ENCODE measurements at regions of chr18 and their contacts with region 1.

Region 1: DNA sequence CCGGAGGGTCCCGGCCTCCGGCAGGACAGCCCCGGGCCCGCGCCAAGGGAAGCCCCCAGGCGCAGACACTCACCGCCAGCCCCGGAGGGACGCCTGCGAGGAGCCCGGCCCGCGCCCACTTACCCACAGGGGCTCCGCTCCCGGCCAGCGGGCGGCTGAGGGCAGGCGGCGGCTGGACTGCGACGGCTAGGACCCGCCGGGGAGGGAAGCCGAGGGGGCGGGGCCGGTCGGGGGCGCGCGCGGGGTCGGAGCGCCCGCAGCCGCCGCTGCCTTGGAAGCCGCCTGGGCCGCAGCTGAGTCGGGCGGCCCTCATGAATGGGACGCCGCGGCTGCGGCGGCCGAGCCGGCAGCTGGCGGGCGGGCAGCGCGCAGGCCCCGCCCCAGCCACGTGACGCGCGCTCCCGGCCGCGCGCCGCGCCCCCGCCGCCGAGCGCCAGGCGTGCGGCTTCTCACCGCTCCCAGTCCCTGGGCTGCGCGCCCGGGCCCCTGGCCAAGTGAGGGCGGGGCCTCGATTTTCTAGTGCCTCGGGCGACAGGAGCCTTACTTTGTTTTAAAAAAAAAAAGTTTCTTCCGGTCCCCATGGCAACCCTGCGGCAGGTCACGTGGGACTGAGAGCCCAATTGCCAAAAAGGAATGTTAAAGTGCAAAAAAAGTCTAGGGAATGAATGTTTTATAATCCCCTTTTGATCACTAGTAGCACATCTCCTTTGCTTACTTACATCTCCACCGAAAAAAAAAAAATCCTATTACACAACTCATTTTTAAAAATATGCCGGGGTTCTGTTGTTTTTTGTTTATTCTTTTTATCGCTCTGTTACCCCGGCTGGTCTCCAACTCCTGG is at the start of gene LPIN2:
- DNase-seq: peak; percentile 67
- ATAC-seq: peak; percentile 92
- H3K4me3 ChIP-seq: peak within 1 kb of the TSS; percentile 63 to 81
- H3K27ac ChIP-seq: peak within 1 kb of the TSS; percentile 83
- H3K4me1 ChIP-seq: peaks cover 34% of the 10 kb centered on the region
- H3K27me3 ChIP-seq: no peaks in the 10 kb centered on the region
- CTCF ChIP-seq: no peak
- total RNA-seq, gene LPIN2: 38.3 TPM

Region 2: DNA sequence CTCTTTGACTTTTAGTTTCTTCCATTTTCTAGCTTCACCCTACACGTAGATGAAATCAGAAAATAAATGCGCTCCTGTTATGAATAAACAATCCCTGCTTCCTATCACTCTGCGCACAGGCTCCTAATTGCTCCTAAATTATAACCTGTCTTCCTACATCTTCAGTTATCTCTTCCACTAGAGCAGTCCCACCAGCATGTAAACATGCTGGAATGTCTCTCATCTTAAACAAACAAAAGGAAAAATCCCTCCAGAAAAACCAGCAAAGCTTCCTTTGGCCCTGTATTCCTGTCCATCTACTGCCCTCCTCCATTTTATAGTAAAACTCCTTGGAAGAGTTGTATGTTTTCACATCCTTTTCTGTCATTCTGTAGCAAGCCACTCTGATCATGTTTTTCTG is 271.5 kb before region 1 on chr18:
- CTCF ChIA-PET with region 1: no interaction called
- POLR2A ChIA-PET with region 1: no interaction called
- in situ Hi-C with region 1: no loop called
- intact Hi-C with region 1: no loop called
- DNase-seq: no peak
- ATAC-seq: no peak
- H3K4me3 ChIP-seq: no peak overlapping the region
- H3K27ac ChIP-seq: no peak overlapping the region
- H3K4me1 ChIP-seq: no peaks in the 10 kb centered on the region
- H3K27me3 ChIP-seq: no peaks in the 10 kb centered on the region
- CTCF ChIP-seq: no peak

Region 3: DNA sequence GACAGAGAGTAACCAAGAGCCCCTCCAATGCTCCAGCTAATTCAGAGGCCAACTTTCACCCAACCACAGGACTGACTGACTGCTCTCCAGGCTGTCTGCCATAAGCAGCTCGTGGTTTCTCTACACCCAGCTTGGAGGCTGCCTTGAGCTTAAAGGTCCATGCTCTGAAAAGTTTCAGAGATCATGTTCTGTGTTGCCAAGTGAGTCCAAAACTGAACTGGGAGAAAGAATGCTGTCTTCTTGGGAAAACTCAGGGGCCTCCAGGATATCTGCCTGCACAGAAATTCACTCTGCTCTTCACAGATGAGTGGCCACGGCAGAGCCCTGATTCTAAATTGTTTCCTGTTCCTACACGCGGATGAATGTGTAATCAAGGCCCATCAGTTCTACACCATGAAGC is 51.4 kb before region 1 on chr18:
- CTCF ChIA-PET with region 1: no interaction called
- POLR2A ChIA-PET with region 1: interaction called, 13 read pairs
- in situ Hi-C with region 1: no loop called
- intact Hi-C with region 1: no loop called
- DNase-seq: no peak
- ATAC-seq: peak; percentile 74
- H3K4me3 ChIP-seq: no peak overlapping the region
- H3K27ac ChIP-seq: peak overlapping the region; percentile 83
- H3K4me1 ChIP-seq: peaks cover 32% of the 10 kb centered on the region
- H3K27me3 ChIP-seq: no peaks in the 10 kb centered on the region
- CTCF ChIP-seq: no peak

Region 4: DNA sequence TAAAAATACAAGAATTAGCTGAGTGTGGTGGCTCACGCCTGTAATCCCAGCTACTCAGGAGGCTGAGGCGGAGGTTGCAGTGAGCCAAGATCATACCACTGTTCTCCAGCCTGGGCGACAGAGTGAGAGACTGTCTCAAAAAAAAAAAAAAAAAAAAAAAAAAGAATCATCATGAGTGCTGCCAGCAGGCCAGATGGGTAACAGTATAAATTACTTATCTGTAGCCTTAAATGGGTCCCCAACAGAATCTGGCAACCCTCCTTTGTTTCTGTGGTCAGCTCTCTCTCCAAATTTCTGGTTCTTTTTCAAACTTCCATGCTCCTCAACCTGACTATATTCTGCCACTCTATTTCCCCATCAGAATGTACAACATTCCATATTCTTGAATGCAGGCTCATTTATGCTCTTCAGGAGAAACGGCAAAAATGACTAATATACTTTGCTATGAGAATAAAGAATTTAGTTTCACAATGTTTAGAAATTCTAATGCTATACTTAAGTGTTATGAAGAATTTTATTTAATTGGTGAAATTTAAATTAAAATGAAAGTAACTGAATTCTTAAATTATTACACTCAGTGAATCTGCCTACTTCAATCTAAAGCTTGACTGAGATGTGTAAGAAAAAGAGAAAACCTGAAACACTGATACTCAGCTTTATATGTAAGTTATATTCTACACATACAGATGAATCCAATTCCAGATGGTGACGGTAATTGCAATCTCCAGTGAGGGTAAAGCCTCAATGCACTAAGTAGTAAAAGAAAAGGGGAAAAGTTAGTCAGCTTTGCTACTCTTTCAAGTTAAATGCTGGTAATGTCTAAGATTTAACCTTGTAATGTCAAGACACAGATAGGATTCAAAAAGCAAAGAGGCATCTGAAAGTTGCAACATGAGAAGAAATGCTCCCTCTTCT is 25.1 kb before region 1 on chr18:
- CTCF ChIA-PET with region 1: no interaction called
- POLR2A ChIA-PET with region 1: interaction called, 12 read pairs
- in situ Hi-C with region 1: no loop called
- intact Hi-C with region 1: no loop called
- DNase-seq: no peak
- ATAC-seq: no peak
- H3K4me3 ChIP-seq: no peak overlapping the region
- H3K27ac ChIP-seq: peak overlapping the region; percentile 57; the same call in 1 of the 2 replicates
- H3K4me1 ChIP-seq: peaks cover 20% of the 10 kb centered on the region
- H3K27me3 ChIP-seq: no peaks in the 10 kb centered on the region
- CTCF ChIP-seq: no peak

Measured in Panc1 (cell line).